ENCODE measurements at regions of chr6 and their contacts with region 1.

Region 1: DNA sequence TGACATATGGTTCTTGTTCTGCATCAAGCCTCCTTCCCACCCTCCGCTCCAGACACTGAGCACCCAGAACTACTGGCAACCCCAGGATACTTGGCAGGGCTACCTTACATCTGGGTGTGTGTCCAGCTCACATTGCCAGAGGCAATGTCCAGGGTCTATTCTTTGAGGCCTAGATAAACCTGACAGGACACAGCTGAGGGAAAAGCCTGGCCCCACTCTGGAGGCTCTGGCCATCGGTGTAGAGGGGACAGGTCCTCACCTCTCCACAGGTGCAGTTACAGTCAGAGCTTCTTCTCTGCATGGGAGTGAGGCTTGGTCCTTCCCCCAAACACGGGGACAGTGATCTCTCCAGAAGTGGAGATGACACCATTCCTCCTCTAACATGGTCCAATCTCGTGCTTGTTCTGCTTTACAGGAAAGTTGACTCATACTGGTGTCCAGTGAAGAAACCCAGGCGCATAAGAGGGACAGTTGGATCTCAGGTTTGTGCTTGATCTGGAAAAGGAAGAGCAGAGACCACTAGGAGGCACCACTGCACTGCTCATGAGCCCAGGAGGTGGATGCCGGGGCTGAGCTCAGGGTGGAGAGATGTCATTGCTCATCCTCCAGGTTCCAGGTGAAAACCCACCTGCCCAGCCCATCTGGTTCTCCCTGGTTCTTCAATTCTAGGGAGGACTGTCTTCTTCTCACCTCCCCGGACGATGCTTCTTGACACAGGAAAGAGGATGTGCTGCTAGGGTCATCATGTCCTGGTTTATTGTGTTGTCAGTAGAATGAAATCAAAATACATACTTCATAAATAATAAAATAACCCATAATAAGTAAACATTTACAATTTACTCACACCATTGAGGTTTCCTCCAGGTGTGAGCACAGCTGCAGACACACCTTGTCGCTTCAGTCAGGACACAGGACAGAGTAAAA is 14.7 kb downstream of the HLA-F start:
- DNase-seq: peak; percentile 75
- H3K4me3 ChIP-seq: no peak overlapping the region
- H3K27ac ChIP-seq: no peak overlapping the region
- H3K4me1 ChIP-seq: no peaks in the 10 kb centered on the region
- H3K27me3 ChIP-seq: no peaks in the 10 kb centered on the region
- CTCF ChIP-seq: peak; percentile 56 to 79 (median 66)
- EP300 ChIP-seq: no peak
- POLR2A ChIP-seq: no peak

Region 2: GRCh38 chr6:28907394-28907793 is 830.6 kb before region 1 on chr6:
- in situ Hi-C with region 1: no loop called
- intact Hi-C with region 1: loop called (anchors 10 kb)
- DNase-seq: no peak
- H3K4me3 ChIP-seq: no peak overlapping the region
- H3K27ac ChIP-seq: no peak overlapping the region
- H3K4me1 ChIP-seq: no peaks in the 10 kb centered on the region
- H3K27me3 ChIP-seq: no peaks in the 10 kb centered on the region
- CTCF ChIP-seq: no peak
- EP300 ChIP-seq: no peak
- POLR2A ChIP-seq: no peak

Region 3: DNA sequence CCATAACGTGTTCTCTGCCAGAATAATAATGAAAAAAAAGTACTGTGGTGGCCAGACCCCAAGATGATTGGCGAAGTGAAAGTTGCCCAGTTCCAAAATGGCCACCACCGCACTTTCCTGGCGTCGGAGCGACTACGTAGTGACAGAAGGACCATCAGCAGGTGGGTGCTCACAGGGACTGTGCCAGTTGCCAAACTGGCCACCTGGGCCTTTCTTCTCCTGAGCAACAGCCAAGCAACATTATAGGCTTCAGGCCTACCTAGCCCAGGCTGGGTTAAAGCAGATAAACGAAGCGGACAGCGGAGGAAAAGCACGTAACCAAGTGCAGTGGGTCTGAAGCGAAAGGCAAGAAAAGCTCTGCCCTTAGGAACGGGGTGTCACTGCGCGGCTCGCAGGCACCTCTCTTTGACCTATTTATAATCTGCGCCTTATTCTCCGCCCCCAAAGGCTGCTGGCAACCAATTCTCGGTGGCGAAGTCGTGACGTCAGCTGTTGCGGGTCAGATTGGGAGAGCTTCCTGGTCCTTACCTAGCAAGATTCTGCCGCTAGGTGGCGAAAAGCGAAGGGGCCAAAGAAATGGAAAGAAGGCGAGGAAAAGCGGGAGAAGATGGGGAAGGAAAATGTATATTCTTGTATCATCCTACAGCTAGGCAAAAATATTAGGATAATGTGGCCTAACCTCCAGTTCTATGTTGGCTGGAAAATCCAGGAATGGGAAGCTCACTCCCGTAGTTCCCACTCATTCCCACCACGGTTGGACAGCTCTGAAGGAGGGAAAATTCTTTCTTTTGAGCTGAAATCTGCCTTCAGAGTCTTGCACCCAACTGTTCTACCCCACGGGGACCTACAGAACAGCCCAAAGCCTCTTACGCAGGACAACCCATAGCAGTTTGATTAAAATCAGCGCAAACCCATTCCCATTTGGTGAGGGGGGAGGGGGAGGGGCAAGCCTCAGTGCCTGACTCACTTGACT is 88.0 kb before region 1 on chr6:
- in situ Hi-C with region 1: no loop called
- intact Hi-C with region 1: no loop called
- DNase-seq: peak; percentile 99
- H3K4me3 ChIP-seq: peak overlapping the region; percentile 31 to 68 (median 52)
- H3K27ac ChIP-seq: peak overlapping the region; percentile 93 to 96 (median 94)
- H3K4me1 ChIP-seq: peaks cover 0 to 14% (median 2%) of the 10 kb centered on the region in 4 donors
- H3K27me3 ChIP-seq: peaks cover 7% of the 10 kb centered on the region
- CTCF ChIP-seq: peak; percentile 89 to 97 (median 95)
- EP300 ChIP-seq: no peak
- POLR2A ChIP-seq: peak; percentile 90

Measured in transverse colon (tissue), 4 donors.